WTC11 (cell line): ENCODE measurements at regions of chr11 and their contacts with region 1.

Region 1: GRCh38 chr11:9137293-9138132 is 46.1 kb upstream of the SCUBE2 start:
- DNase-seq: peak; percentile 94
- ATAC-seq: peak; percentile 99
- H3K4me3 Mint-ChIP-seq: no peak overlapping the region
- H3K27ac Mint-ChIP-seq: peak overlapping the region; percentile 73
- H3K4me1 Mint-ChIP-seq: peaks cover 14% of the 10 kb centered on the region
- H3K27me3 Mint-ChIP-seq: no peaks in the 10 kb centered on the region
- CTCF ChIP-seq: peak; percentile 84

Region 2: GRCh38 chr11:8839957-8840945 is 297.3 kb before region 1 on chr11:
- CTCF ChIA-PET with region 1: no interaction called
- POLR2A ChIA-PET with region 1: no interaction called
- DNase-seq: no peak
- ATAC-seq: peak; percentile 82
- H3K4me3 Mint-ChIP-seq: peak overlapping the region; percentile 19; the same call in 1 of the 2 replicates
- H3K27ac Mint-ChIP-seq: peak overlapping the region; percentile 86
- H3K4me1 Mint-ChIP-seq: peaks cover 38% of the 10 kb centered on the region
- H3K27me3 Mint-ChIP-seq: no peaks in the 10 kb centered on the region
- CTCF ChIP-seq: no peak

Region 3: DNA sequence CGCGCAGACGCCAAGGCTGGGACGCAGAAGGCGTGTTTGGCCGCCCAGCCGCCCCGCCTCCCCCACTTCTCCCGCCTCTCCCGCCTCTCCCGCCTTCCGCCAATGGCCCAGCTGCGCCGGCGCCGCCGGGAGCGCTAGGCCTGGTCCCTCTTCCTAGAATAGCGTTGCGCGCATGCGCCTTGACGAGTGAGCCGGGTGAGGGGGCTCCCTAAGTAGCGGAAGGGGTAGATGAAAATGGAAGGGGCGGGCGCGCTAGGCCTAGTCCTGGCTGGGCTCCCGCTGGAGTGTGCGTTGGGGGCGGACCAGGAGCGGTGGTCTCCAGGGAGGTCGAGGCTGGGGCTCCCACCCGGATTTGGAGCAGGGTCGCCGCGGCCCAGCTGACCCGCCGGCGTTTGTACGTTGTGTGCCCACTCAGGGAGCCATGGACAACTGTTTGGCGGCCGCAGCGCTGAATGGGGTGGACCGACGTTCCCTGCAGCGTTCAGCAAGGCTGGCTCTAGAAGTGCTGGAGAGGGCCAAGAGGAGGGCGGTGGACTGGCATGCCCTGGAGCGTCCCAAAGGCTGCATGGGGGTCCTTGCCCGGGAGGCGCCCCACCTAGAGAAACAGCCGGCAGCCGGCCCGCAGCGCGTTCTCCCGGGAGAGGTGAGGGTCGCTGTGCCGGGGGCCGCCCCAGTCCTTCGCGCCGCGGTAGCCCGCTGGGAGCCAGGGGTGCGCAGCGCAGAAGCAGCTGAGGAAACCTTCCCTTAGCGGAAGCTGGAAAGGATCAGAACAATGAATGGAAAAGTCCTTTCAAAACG is 226.3 kb before region 1 on chr11 and contains the start of gene AKIP1:
- CTCF ChIA-PET with region 1: interaction called, 17 read pairs
- POLR2A ChIA-PET with region 1: no interaction called
- DNase-seq: peak; percentile 98
- ATAC-seq: peak; percentile 92
- H3K4me3 Mint-ChIP-seq: peak within 1 kb of the TSS; percentile 84
- H3K27ac Mint-ChIP-seq: peak within 1 kb of the TSS; percentile 68; the same call in 1 of the 2 replicates
- H3K4me1 Mint-ChIP-seq: peaks cover 29% of the 10 kb centered on the region
- H3K27me3 Mint-ChIP-seq: peaks cover 28% of the 10 kb centered on the region
- CTCF ChIP-seq: no peak
- total RNA-seq, gene AKIP1: 21.1 to 26.0 TPM (median 22.0 TPM) in 3 replicates

Region 4: DNA sequence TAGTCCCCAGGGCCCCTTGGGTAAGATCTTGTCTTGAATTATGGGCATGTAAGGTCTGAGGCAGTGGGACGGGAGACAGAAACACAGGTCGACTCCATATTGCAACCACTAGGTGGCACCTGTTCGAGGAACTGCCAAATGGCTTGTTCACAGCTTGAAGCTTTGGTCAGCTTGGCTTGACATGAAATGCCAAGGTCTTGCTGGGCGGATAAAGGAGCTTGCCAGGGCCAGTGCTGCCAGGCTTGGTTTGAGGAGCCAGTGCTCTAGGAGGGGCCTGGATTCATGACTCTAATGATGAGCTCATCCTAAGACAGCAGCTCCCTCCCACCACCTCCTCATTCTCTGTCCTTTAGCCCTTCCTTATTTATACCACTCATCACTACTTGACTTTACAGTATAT is 121.8 kb before region 1 on chr11:
- CTCF ChIA-PET with region 1: interaction called, 88 read pairs
- POLR2A ChIA-PET with region 1: no interaction called
- DNase-seq: peak; percentile 70
- ATAC-seq: peak; percentile 96
- H3K4me3 Mint-ChIP-seq: no peak overlapping the region
- H3K27ac Mint-ChIP-seq: no peak overlapping the region
- H3K4me1 Mint-ChIP-seq: peaks cover 4% of the 10 kb centered on the region
- H3K27me3 Mint-ChIP-seq: no peaks in the 10 kb centered on the region; the same call in 1 of the 2 replicates
- CTCF ChIP-seq: peak; percentile 80

Region 5: DNA sequence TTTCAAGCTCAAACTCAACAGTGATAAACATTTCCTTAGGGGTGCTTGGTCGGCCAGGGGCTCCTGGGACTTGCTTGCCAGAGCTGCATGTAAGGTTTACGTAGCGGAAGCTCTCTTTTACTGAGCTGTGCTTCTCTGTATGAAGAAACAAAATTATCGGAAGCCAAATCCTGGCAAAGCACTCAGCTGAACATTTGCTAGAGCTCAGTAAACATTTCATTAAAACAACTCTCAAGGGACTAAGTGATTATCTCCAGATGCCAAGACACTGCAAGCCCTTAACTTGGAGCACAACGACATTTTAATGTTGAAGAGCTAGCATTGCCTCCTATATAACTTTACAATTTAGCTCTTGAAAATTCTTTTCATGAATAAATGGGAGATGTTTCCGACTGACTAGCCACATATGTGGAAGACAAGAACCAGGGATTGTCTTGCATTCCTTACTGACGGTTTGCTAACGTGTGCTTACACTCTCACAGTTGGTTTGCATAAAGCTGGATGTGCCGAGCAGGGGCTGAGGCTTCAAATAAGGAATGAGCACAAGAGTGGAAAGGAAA is 89.5 kb before region 1 on chr11:
- CTCF ChIA-PET with region 1: interaction called, 20 read pairs
- POLR2A ChIA-PET with region 1: interaction called, 3 read pairs
- DNase-seq: no peak
- ATAC-seq: no peak; the same call in 1 of the 2 replicates
- H3K4me3 Mint-ChIP-seq: no peak overlapping the region
- H3K27ac Mint-ChIP-seq: no peak overlapping the region
- H3K4me1 Mint-ChIP-seq: peaks cover 33% of the 10 kb centered on the region
- H3K27me3 Mint-ChIP-seq: no peaks in the 10 kb centered on the region
- CTCF ChIP-seq: no peak

Region 6: DNA sequence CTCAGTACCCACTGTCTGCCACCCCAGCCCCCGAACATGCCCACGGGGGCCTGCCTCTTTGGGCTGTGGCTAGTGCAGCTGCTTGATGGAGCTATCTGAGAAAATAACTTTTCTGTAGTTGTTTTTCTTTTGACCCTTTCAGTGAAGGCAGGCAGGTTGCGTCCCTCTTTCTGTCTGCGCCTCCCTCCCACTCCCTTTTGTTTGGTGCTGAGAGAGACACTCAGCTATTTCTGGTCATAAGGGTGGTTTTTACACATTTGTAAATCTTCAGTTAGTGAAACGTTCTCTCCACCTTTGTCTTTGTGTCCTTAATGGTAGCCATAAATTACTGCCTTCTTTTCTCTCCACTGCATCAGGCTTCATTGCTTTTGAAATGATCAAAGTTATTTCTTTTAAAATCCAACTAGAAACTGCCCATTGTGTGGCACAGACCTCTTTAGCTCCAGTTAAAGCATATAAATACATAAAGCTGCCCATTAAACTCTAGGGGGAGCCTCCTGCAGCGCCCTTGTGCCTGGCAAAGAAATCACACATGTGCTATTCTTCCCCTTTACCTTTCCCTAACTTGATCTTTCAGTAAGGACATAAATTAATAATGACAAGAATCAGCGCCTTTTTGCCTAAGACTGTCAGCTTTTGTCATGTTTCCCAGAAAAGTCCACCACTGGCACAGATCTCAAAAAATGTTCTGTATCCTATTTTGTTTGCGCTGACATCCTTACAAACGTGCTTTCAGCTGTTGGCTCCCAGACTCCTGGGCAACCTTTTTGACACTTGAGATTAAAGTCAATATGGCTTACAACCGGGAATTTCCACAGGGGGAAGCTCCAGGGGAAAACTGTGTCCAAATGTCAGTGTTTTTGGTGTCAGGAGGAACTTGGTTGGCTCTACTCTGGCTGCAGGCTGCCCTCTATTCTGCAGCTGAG is 44.4 kb before region 1 on chr11:
- CTCF ChIA-PET with region 1: interaction called, 64 read pairs
- POLR2A ChIA-PET with region 1: interaction called, 6 read pairs
- DNase-seq: no peak
- ATAC-seq: no peak
- H3K4me3 Mint-ChIP-seq: peak overlapping the region; percentile 58
- H3K27ac Mint-ChIP-seq: no peak overlapping the region
- H3K4me1 Mint-ChIP-seq: peaks cover 12% of the 10 kb centered on the region
- H3K27me3 Mint-ChIP-seq: peaks cover 49% of the 10 kb centered on the region
- CTCF ChIP-seq: no peak

Region 7: DNA sequence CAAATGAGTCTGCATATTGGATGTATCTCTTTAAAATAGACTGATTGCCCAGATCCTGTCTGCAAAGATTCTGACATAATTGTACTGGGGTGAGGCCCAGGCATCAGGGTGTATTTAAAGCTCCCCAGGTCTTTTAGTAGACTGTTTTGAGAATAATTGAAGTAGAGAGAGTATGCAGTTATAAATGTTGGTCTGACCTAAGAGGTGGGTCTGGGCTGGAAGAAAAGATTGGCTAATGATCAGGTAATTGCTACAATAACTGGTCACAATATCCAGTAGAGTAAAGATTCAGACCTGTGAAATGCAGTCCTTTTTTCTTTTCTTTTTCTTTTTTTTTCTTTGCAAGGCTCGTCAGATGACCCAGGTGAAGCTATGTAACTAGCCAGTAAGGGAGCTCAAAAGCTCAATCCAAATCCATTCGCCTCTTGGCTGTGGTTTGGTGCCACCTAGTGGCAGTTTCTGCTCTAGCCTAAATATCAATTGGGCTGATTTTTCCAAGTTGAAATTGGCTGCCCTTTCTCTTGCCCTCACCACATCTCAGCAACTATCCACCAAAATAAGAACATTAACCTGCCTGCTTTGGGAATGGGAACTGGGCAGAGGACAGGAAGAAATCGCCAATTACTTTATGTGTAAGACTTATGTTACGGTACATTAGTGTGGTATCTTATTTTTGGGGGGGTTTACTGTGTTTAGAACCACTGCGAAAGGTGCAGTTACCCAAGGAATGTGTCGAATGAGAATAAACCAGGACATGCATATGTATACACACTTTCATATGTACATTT is 369.2 kb after region 1 on chr11:
- CTCF ChIA-PET with region 1: interaction called, 22 read pairs
- POLR2A ChIA-PET with region 1: no interaction called
- DNase-seq: peak; percentile 84
- ATAC-seq: peak; percentile 95
- H3K4me3 Mint-ChIP-seq: peak overlapping the region; percentile 3; the same call in 1 of the 2 replicates
- H3K27ac Mint-ChIP-seq: peak overlapping the region; percentile 95
- H3K4me1 Mint-ChIP-seq: peaks cover 26% of the 10 kb centered on the region
- H3K27me3 Mint-ChIP-seq: no peaks in the 10 kb centered on the region
- CTCF ChIP-seq: peak; percentile 76